Activated T-helper 2 cell treated with anti-CD3 and anti-CD28 coated beads, Interferon-gamma antibody, Interleukin-2, Interleukin-4, amounts not matched to agents 10 μg/mL and 5 μg/mL and 100 μg/mL, durations not matched to agents 14 hours and 24 hours and 36 hours (primary cell): ENCODE measurements at regions of chr6 and their contacts with region 1.

Region 1: DNA sequence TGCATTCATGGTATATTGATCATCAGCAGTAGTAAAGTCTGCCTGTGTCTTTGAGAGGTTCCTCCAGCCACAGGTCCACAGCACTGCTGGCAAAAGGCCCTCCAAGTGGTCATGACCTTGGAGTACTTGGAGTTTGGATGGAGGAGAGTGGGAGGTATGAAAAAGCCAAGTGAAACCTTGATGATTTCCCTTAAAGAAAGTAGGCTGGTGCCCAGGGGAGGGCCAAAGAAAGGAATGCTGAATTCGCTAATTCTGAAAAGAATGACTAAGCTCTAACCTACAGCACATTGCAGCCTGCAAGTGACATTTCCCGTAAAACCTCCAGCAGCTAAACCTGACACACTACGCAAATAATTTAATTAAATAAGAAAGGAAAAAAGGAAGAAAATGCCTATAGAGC is 223.4 kb upstream of the TAB2 start:
- DNase-seq: no peak
- H3K4me3 Mint-ChIP-seq: peak overlapping the region; percentile 50
- H3K27ac Mint-ChIP-seq: peak overlapping the region; percentile 84
- H3K4me1 Mint-ChIP-seq: peaks cover 63% of the 10 kb centered on the region
- H3K27me3 Mint-ChIP-seq: no peaks in the 10 kb centered on the region

Region 2: GRCh38 chr6:147774856-147775255 is 1319.3 kb before region 1 on chr6:
- intact Hi-C with region 1: no loop called
- DNase-seq: no peak
- H3K4me3 Mint-ChIP-seq: no peak overlapping the region
- H3K27ac Mint-ChIP-seq: no peak overlapping the region
- H3K4me1 Mint-ChIP-seq: no peaks in the 10 kb centered on the region
- H3K27me3 Mint-ChIP-seq: no peaks in the 10 kb centered on the region

Region 3: GRCh38 chr6:148972481-148972880 is 121.7 kb before region 1 on chr6:
- intact Hi-C with region 1: no loop called
- DNase-seq: peak; percentile 19
- H3K4me3 Mint-ChIP-seq: no peak overlapping the region
- H3K27ac Mint-ChIP-seq: no peak overlapping the region
- H3K4me1 Mint-ChIP-seq: no peaks in the 10 kb centered on the region
- H3K27me3 Mint-ChIP-seq: peaks cover 42% of the 10 kb centered on the region

Region 4: DNA sequence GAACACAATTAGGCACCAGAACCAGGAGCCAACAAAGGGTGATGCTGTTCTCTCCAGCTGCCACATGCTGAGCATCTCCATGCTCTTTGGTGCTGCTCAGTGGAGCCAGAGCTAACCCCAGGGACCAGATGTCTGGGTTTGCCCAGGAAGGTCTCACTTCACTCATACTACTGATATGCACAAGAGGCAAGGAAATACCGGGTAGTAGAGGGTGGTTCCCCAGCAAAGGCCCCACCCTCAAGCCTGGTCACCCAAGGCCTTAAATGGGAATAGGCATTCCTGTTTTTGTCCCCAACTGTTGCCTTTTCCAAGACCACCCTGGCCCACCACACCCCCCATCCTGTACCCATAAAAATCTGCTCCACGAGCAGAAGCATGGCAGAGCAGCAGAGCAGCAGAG is 18.8 kb after region 1 on chr6:
- intact Hi-C with region 1: loop called (anchors 2 kb)
- DNase-seq: no peak
- H3K4me3 Mint-ChIP-seq: no peak overlapping the region
- H3K27ac Mint-ChIP-seq: peak overlapping the region; percentile 64
- H3K4me1 Mint-ChIP-seq: peaks cover 62% of the 10 kb centered on the region
- H3K27me3 Mint-ChIP-seq: no peaks in the 10 kb centered on the region

Region 5: GRCh38 chr6:149140137-149140909 is 46.2 kb after region 1 on chr6:
- intact Hi-C with region 1: loop called (anchors 1 kb)
- DNase-seq: no peak
- H3K4me3 Mint-ChIP-seq: peak overlapping the region; percentile 84
- H3K27ac Mint-ChIP-seq: peak overlapping the region; percentile 100
- H3K4me1 Mint-ChIP-seq: peaks cover 46% of the 10 kb centered on the region
- H3K27me3 Mint-ChIP-seq: no peaks in the 10 kb centered on the region

Region 6: GRCh38 chr6:149271348-149272340 is 177.5 kb after region 1 on chr6:
- intact Hi-C with region 1: no loop called
- DNase-seq: no peak
- H3K4me3 Mint-ChIP-seq: peak overlapping the region; percentile 58
- H3K27ac Mint-ChIP-seq: peak overlapping the region; percentile 83
- H3K4me1 Mint-ChIP-seq: peaks cover 39% of the 10 kb centered on the region
- H3K27me3 Mint-ChIP-seq: no peaks in the 10 kb centered on the region